Caco-2 (cell line): ENCODE measurements at regions of chr10 and their contacts with region 1.

Region 1: GRCh38 chr10:69237528-69238159 is 17.5 kb downstream of the HKDC1 start:
- DNase-seq: peak; percentile 86 to 95
- H3K4me3 ChIP-seq: no peak overlapping the region
- H3K4me3 Mint-ChIP-seq: no peak overlapping the region
- H3K27ac Mint-ChIP-seq: no peak overlapping the region
- H3K4me1 ChIP-seq: peaks cover 5% of the 10 kb centered on the region
- H3K4me1 Mint-ChIP-seq: peaks cover under 1% of the 10 kb centered on the region
- H3K27me3 ChIP-seq: no peaks in the 10 kb centered on the region
- H3K27me3 Mint-ChIP-seq: no peaks in the 10 kb centered on the region
- CTCF ChIP-seq: peak; percentile 99 to 100

Region 2: GRCh38 chr10:69290993-69291392 is 53.3 kb after region 1 on chr10:
- CTCF ChIA-PET with region 1: no interaction called
- POLR2A ChIA-PET with region 1: no interaction called
- intact Hi-C with region 1: no loop called
- DNase-seq: no peak
- H3K4me3 ChIP-seq: no peak overlapping the region
- H3K4me3 Mint-ChIP-seq: no peak overlapping the region
- H3K27ac Mint-ChIP-seq: no peak overlapping the region
- H3K4me1 ChIP-seq: no peaks in the 10 kb centered on the region
- H3K4me1 Mint-ChIP-seq: no peaks in the 10 kb centered on the region
- H3K27me3 ChIP-seq: no peaks in the 10 kb centered on the region
- H3K27me3 Mint-ChIP-seq: peaks cover 4% of the 10 kb centered on the region
- CTCF ChIP-seq: no peak

Region 3: GRCh38 chr10:69360485-69361324 is 123.1 kb after region 1 on chr10:
- CTCF ChIA-PET with region 1: interaction called, 9 read pairs
- POLR2A ChIA-PET with region 1: no interaction called
- intact Hi-C with region 1: loop called (anchors 1 kb)
- DNase-seq: peak; percentile 75
- H3K4me3 ChIP-seq: no peak overlapping the region
- H3K4me3 Mint-ChIP-seq: no peak overlapping the region
- H3K27ac Mint-ChIP-seq: peak overlapping the region; percentile 37
- H3K4me1 ChIP-seq: peaks cover 13% of the 10 kb centered on the region
- H3K4me1 Mint-ChIP-seq: peaks cover 24% of the 10 kb centered on the region
- H3K27me3 ChIP-seq: no peaks in the 10 kb centered on the region
- H3K27me3 Mint-ChIP-seq: no peaks in the 10 kb centered on the region
- CTCF ChIP-seq: no peak

Region 4: GRCh38 chr10:69398466-69398865 is 160.8 kb after region 1 on chr10:
- CTCF ChIA-PET with region 1: no interaction called
- POLR2A ChIA-PET with region 1: no interaction called
- intact Hi-C with region 1: no loop called
- DNase-seq: no peak
- H3K4me3 ChIP-seq: no peak overlapping the region
- H3K4me3 Mint-ChIP-seq: no peak overlapping the region
- H3K27ac Mint-ChIP-seq: no peak overlapping the region
- H3K4me1 ChIP-seq: no peaks in the 10 kb centered on the region
- H3K4me1 Mint-ChIP-seq: no peaks in the 10 kb centered on the region
- H3K27me3 ChIP-seq: no peaks in the 10 kb centered on the region
- H3K27me3 Mint-ChIP-seq: no peaks in the 10 kb centered on the region
- CTCF ChIP-seq: no peak

Region 5: DNA sequence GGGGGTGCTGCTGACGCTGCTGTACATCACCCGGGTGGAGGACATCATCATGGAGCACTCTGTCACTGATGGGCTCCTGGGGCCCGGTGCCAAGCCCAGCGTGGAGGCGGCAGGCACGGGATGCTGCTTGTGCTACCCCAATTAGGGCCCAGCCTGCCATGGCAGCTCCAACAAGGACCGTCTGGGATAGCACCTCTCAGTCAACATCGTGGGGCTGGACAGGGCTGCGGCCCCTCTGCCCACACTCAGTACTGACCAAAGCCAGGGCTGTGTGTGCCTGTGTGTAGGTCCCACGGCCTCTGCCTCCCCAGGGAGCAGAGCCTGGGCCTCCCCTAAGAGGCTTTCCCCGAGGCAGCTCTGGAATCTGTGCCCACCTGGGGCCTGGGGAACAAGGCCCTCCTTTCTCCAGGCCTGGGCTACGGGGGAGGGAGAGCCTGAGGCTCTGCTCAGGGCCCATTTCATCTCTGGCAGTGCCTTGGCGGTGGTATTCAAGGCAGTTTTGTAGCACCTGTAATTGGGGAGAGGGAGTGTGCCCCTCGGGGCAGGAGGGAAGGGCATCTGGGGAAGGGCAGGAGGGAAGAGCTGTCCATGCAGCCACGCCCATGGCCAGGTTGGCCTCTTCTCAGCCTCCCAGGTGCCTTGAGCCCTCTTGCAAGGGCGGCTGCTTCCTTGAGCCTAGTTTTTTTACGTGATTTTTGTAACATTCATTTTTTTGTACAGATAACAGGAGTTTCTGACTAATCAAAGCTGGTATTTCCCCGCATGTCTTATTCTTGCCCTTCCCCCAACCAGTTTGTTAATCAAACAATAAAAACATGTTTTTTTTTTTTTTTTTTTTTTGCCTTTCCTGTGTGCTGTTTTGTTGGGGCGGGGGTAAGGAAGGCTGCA is 269.4 kb after region 1 on chr10:
- CTCF ChIA-PET with region 1: no interaction called
- POLR2A ChIA-PET with region 1: no interaction called
- intact Hi-C with region 1: loop called (anchors 5 kb)
- DNase-seq: peak in 1 of 2 experiments; percentile 44
- H3K4me3 ChIP-seq: no peak overlapping the region
- H3K4me3 Mint-ChIP-seq: no peak overlapping the region
- H3K27ac Mint-ChIP-seq: no peak overlapping the region
- H3K4me1 ChIP-seq: peaks cover 5% of the 10 kb centered on the region
- H3K4me1 Mint-ChIP-seq: no peaks in the 10 kb centered on the region
- H3K27me3 ChIP-seq: no peaks in the 10 kb centered on the region
- H3K27me3 Mint-ChIP-seq: no peaks in the 10 kb centered on the region
- CTCF ChIP-seq: no peak

Region 6: DNA sequence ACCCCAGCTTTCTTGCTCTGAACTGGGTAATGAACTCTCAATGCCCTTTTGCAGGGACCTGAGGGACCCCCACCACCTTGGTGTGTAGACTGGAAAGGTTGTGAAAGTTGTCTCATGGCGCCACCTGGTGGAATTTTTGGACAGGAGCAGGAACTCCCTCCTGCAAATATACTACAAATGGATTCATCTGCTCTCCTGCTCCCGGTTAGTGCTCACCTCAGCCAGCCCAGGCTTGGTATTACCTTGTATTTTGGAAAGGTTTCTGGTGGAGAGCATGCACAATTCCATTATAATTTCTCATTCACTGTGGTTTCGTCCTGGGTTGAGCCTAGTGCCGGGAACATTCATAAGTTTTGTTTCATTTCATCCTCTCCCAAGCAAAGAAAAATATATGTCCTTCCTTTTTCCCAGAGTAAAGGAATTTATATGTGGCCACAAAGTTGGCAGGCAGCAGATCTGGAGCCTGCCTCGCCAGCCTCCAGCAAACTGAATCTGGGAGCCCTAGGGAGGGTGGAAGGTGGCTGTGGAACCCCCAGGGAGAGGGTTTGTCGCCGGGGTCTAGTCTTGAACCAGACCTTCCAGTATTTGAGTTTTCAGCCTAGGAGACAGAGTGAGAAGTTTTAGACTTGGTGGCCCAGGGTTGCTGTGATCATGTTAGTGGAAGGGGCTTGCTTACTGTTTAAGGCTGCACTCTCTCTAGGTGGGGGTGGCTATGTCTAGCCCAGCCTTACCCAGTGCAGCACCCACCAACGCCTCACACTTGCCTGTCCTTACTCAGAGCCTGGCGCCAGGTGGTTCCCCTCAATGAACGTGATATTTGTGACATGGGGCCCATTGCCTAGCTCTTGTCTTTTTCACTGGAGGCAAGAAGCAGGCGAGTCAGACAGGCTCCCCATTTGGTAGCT is 401.9 kb after region 1 on chr10:
- CTCF ChIA-PET with region 1: no interaction called
- POLR2A ChIA-PET with region 1: no interaction called
- intact Hi-C with region 1: loop called (anchors 5 kb)
- DNase-seq: peak; percentile 83 to 85
- H3K4me3 ChIP-seq: no peak overlapping the region
- H3K4me3 Mint-ChIP-seq: no peak overlapping the region
- H3K27ac Mint-ChIP-seq: no peak overlapping the region
- H3K4me1 ChIP-seq: no peaks in the 10 kb centered on the region
- H3K4me1 Mint-ChIP-seq: no peaks in the 10 kb centered on the region
- H3K27me3 ChIP-seq: 0 out of 2 replicates have a peak, but pooled peaks cover 1% of the 10 kb centered on the region
- H3K27me3 Mint-ChIP-seq: peaks cover 7% of the 10 kb centered on the region
- CTCF ChIP-seq: peak; percentile 97 to 99